ENCODE measurements at regions of chr17 and their contacts with region 1.

Region 1: DNA sequence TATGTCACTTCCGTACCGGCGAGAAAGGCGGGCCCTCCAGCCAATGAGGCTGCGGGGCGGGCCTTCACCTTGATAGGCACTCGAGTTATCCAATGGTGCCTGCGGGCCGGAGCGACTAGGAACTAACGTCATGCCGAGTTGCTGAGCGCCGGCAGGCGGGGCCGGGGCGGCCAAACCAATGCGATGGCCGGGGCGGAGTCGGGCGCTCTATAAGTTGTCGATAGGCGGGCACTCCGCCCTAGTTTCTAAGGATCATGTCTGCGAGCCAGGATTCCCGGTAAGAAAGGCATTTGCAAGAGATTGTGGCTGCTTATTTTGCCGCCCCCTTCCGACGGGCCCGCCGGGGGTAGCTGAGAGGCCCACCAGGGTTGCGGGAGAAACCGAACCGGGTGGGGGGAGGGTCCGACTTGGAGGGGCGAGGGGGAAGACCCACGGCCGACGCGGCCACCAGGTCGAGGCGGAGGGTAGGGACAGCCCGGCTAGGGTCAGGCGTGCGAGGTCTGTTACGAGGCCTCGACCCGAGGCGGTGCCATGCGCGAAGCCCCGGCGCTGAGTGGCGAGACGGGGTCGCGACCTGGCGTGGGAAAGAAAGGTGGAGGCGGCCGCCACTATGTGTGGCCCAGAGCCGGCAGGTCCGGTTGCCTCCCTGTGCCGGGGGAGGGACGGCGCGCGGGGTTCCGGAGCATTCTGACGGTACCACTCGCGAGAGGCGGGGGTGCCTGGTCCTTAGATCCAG is 6.7 kb upstream of the CD68 start:
- DNase-seq: peak; percentile 100
- ATAC-seq: peak; percentile 92
- H3K4me3 Mint-ChIP-seq: peak overlapping the region; percentile 94
- H3K27ac Mint-ChIP-seq: peak overlapping the region; percentile 99
- H3K4me1 Mint-ChIP-seq: peaks cover 51% of the 10 kb centered on the region
- H3K27me3 Mint-ChIP-seq: no peaks in the 10 kb centered on the region

Region 2: DNA sequence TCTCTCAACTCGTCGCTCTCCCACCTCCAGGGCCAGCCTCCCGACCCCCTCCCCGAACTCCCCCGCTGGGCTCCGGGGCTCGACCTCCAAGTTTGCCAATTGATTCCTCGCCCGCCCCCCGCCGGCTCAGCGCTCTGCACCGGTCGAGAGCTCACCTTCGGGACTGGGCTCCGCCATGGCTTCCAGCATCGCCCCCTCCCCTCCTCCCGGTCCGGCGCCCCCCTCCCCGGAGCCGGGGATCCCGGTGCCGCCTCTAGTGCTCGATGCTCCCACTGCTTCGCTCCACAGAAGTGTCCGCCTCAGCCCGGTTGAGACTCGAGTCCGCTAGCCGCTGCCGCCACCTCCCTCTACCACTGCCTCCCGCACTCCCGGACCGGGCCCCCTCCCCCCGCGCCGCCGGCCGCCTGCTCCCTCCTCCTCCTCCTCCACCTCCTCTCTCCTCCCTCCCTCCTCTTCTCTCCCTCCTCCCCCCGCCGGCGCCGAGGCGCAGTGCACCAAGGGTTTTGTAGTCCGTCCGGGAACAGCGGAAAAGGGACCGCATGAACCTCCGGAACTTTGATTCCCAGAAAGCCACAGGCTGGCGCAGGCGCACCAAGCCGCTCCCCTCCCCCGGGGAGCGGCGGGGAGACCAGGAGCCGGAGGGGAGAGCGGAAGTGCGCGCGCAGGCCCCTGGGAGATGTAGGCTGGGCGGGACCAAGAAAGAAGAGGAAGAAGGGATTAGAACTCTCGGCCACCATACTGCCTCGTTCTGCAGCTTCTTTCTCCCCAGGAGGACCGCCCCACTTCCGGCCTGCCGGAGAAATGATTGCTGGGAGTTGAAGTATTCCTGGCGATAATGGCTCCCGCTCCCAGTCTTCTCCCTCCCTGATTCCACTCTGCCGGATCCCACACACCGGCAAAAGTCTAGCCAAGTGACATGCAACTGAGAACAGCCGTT is 333.4 kb before region 1 on chr17 and contains the start of gene PHF23:
- CTCF ChIA-PET with region 1: no interaction called
- POLR2A ChIA-PET with region 1: no interaction called
- intact Hi-C with region 1: loop called in 1 of 2 experiments (anchors 1 kb)
- DNase-seq: peak; percentile 99
- ATAC-seq: peak; percentile 74
- H3K4me3 Mint-ChIP-seq: peak within 1 kb of the TSS; percentile 97
- H3K27ac Mint-ChIP-seq: peak within 1 kb of the TSS; percentile 93
- H3K4me1 Mint-ChIP-seq: peaks cover 61% of the 10 kb centered on the region
- H3K27me3 Mint-ChIP-seq: no peaks in the 10 kb centered on the region
- total RNA-seq, gene PHF23: 23.6 to 35.2 TPM

Region 3: DNA sequence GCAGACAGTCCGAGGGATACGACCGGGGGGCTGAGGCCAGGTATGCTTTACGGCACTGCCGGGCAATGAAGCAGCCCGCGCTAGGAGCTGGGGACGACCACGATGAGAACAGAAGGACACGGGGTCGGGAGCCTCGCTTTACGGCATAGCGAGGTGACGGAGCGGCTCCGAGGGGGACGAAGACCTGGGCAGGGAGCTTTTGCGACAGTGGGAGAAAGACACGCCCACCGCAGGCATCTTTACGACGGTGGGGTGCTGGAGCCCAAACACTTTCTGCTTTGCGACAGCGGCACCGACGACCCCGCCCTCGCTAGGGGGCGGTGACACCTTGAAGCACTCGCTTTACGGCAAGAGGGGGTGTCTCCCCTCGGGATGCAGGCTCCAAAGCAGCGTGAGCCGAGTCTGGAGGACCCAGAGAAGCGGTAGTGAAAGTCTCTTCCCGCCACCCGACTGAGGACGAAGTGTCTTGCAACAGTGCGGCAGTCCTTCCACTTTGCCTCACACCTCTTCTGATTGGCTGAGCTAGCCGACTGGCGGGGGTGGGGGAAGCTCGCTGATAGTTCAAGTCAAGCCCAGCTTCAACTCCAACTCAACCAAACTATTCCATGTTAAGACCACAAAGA is 243.3 kb before region 1 on chr17:
- CTCF ChIA-PET with region 1: no interaction called
- POLR2A ChIA-PET with region 1: interaction called, 8 read pairs
- intact Hi-C with region 1: loop called in 1 of 2 experiments (anchors 1 kb)
- DNase-seq: peak; percentile 98
- ATAC-seq: peak; percentile 69
- H3K4me3 Mint-ChIP-seq: peak overlapping the region; percentile 89
- H3K27ac Mint-ChIP-seq: peak overlapping the region; percentile 96
- H3K4me1 Mint-ChIP-seq: peaks cover 44% of the 10 kb centered on the region
- H3K27me3 Mint-ChIP-seq: no peaks in the 10 kb centered on the region

Region 4: DNA sequence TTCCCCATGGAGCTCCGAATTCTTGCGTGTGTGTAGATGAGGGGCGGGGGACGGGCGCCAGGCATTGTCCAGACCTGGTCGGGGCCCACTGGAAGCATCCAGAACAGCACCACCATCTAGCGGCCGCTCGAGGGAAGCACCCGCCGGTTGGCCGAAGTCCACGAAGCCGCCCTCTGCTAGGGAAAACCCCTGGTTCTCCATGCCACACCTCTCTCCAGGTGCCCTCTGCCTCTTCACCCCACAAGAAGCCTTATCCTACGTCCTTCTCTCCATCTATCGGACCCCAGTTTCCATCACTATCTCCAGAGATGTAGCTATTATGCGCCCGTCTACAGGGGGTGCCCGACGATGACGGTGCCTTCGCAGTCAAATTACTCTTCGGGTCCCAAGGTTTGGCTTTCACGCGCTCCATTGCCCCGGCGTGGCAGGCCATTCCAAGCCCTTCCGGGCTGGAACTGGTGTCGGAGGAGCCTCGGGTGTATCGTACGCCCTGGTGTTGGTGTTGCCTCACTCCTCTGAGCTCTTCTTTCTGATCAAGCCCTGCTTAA is 11.7 kb before region 1 on chr17:
- CTCF ChIA-PET with region 1: interaction called, 25 read pairs
- POLR2A ChIA-PET with region 1: interaction called, 6 read pairs
- intact Hi-C with region 1: loop called (anchors 1 kb)
- DNase-seq: peak; percentile 92
- ATAC-seq: peak; percentile 75
- H3K4me3 Mint-ChIP-seq: peak overlapping the region; percentile 79
- H3K27ac Mint-ChIP-seq: peak overlapping the region; percentile 87
- H3K4me1 Mint-ChIP-seq: peaks cover 46% of the 10 kb centered on the region
- H3K27me3 Mint-ChIP-seq: no peaks in the 10 kb centered on the region

Region 5: GRCh38 chr17:7856883-7857723 is 284.3 kb after region 1 on chr17 and contains the start of gene NAA38:
- CTCF ChIA-PET with region 1: no interaction called
- POLR2A ChIA-PET with region 1: no interaction called
- intact Hi-C with region 1: loop called in 1 of 2 experiments (anchors 1 kb)
- DNase-seq: peak; percentile 97
- ATAC-seq: peak; percentile 91
- H3K4me3 Mint-ChIP-seq: no peak within 1 kb of the TSS
- H3K27ac Mint-ChIP-seq: no peak within 1 kb of the TSS
- H3K4me1 Mint-ChIP-seq: peaks cover 18% of the 10 kb centered on the region
- H3K27me3 Mint-ChIP-seq: no peaks in the 10 kb centered on the region
- total RNA-seq, gene NAA38: 64.7 to 79.8 TPM

Region 6: DNA sequence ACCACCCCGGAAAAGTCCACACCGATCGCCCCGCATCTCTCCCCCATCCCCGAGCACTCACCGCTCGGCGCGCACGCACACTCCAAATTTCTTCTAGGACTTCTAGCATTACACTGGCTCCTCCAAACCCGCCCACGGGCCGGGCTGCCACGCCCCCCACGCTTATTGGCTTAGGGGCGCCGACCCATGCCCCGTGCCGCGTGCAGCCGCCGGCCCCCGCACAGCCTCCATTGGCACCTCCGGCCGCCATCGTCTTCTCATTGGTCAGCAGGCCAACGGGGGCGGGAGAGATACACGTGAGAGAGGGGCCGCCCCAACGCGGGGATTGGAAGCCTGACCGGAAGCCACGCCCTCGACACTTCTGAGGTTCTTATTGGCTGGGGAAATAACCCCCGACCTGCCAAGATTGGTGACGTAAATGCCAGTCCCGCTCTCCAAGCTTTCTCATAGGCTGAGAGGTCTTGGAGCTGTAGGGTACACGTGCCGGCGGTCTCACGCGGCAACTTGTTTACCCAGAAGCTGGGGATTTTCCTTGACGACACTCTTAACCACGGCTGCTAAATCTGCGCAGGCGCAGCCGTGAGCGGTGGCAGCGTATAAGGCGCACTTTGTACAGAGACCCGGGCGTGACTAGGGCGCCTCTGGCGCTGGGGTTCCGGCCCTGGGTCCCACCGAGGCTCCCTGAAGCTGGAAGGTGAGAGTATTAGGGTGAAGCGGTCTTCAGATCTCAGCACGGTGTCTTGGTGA is 583.7 kb after region 1 on chr17:
- CTCF ChIA-PET with region 1: no interaction called
- POLR2A ChIA-PET with region 1: no interaction called
- intact Hi-C with region 1: loop called (anchors 5 to 10 kb)
- DNase-seq: peak; percentile 100
- ATAC-seq: peak; percentile 75
- H3K4me3 Mint-ChIP-seq: no peak overlapping the region
- H3K27ac Mint-ChIP-seq: no peak overlapping the region
- H3K4me1 Mint-ChIP-seq: peaks cover 49% of the 10 kb centered on the region
- H3K27me3 Mint-ChIP-seq: no peaks in the 10 kb centered on the region